ENCODE measurements at regions of chr18 and their contacts with region 1.

Region 1: DNA sequence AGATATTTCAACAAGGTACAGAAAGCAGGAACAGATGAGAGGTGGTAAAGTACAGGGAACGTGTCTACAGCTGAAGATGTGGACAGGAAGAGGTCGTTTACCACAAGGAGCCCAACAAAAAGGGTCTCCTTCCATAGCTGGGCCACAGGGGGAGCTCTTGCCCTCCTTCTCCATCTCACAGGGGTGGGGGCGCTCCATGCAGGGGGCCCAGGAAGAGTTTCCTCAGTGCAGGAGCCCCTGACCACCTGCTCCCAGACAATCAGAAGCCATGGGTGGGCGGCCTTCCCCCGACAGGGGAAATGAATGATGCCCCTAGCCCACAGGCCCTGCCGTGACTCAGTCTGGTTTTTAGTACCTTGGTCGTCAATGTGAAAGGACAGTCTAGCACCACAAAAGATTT is 163.6 kb upstream of the ZNF516 start:
- DNase-seq: peak in 1 of 2 experiments; percentile 83
- H3K4me3 ChIP-seq: no peak overlapping the region
- H3K27ac ChIP-seq: no peak overlapping the region
- H3K4me1 ChIP-seq: no peaks in the 10 kb centered on the region
- H3K27me3 ChIP-seq: no peaks in the 10 kb centered on the region
- CTCF ChIP-seq: peak; percentile 83 to 89 (median 86)
- EP300 ChIP-seq: peak in 1 of 2 experiments; percentile 64; a peak in 1 of 3 replicates
- POLR2A ChIP-seq: no peak
- RAD21 ChIP-seq: peak; percentile 78 to 82

Region 2: GRCh38 chr18:76356666-76357065 is 302.0 kb before region 1 on chr18:
- CTCF ChIA-PET with region 1: no interaction called
- POLR2A ChIA-PET with region 1: no interaction called
- DNase-seq: no peak
- H3K4me3 ChIP-seq: no peak overlapping the region
- H3K27ac ChIP-seq: no peak overlapping the region
- H3K4me1 ChIP-seq: peaks cover 0 to 5% (median 2%) of the 10 kb centered on the region in 4 experiments; a peak in 3 of 7 replicates
- H3K27me3 ChIP-seq: no peaks in the 10 kb centered on the region
- CTCF ChIP-seq: no peak
- EP300 ChIP-seq: no peak
- POLR2A ChIP-seq: no peak
- RAD21 ChIP-seq: no peak

Region 3: DNA sequence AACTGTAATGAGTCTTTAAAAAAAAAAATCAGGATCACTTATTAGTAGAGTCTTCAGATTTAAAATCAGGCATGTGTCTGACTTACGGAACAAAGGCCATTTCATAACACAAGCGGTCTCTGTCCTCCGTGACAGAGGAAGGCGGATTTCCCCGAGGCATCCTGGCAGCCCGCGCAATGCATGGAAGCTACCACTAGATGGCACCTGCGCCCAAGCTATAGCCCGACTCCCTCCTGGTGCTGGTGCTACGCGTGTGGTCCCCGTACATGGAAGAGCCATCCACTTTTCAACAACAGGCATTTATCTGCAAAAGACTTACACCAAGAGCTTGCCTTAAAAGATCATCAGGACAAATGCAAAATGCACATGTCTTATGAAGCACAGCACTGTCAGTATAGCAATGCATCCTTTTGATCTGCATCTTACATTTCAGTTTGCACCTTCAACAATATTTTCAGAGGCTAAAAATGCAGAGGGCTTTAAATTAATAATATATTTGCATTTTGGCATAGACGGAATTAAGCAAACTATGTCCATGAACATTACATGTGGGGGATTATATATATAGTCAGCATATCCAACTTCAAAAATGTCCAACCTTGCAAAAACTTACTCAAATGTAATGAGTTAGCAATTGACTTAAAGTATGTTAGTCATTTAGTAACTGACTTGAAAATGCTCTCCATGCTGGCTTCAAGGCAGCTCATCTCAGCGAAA is 259.6 kb before region 1 on chr18:
- CTCF ChIA-PET with region 1: interaction called, 17 read pairs
- POLR2A ChIA-PET with region 1: no interaction called
- DNase-seq: peak; percentile 34 to 90
- H3K4me3 ChIP-seq: no peak overlapping the region
- H3K27ac ChIP-seq: no peak overlapping the region
- H3K4me1 ChIP-seq: peaks cover 0 to 3% (median 1%) of the 10 kb centered on the region in 4 experiments; a peak in 4 of 7 replicates
- H3K27me3 ChIP-seq: no peaks in the 10 kb centered on the region
- CTCF ChIP-seq: peak; percentile 90 to 99 (median 96)
- EP300 ChIP-seq: no peak
- POLR2A ChIP-seq: no peak
- RAD21 ChIP-seq: peak; percentile 96 to 99

Region 4: GRCh38 chr18:76480913-76481312 is 177.7 kb before region 1 on chr18:
- CTCF ChIA-PET with region 1: interaction called, 23 read pairs
- POLR2A ChIA-PET with region 1: no interaction called
- DNase-seq: no peak
- H3K4me3 ChIP-seq: no peak overlapping the region
- H3K27ac ChIP-seq: no peak overlapping the region
- H3K4me1 ChIP-seq: peaks cover 0 to 5% (median 4%) of the 10 kb centered on the region in 4 experiments; a peak in 4 of 7 replicates
- H3K27me3 ChIP-seq: no peaks in the 10 kb centered on the region
- CTCF ChIP-seq: peak; percentile 46 to 62 (median 47)
- EP300 ChIP-seq: no peak
- POLR2A ChIP-seq: no peak
- RAD21 ChIP-seq: peak; percentile 36 to 46

Region 5: DNA sequence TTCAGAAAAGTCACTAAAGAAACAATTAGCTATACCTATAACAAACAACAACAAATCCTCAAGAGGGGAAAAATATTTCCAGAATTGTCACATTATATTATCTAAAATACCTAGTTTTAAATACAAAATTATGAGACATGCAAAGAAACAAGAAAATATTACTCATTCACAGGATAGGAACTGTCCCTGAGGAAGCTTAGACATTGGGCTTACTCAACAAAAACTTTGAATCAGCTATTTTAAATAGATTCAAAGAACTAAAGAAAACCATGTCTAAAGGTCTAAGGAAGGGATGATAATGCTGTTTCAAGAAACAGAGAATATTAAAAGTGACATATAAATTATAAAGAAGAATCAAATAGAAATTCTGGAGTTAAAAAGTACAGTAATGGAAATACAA is 31.6 kb before region 1 on chr18:
- CTCF ChIA-PET with region 1: interaction called, 27 read pairs
- POLR2A ChIA-PET with region 1: no interaction called
- DNase-seq: no peak
- H3K4me3 ChIP-seq: no peak overlapping the region
- H3K27ac ChIP-seq: no peak overlapping the region
- H3K4me1 ChIP-seq: peaks cover 0 to 3% (median 2%) of the 10 kb centered on the region in 4 experiments; a peak in 6 of 7 replicates
- H3K27me3 ChIP-seq: peaks cover 0 to 9% (median 4%) of the 10 kb centered on the region in 4 experiments; a peak in 4 of 7 replicates
- CTCF ChIP-seq: no peak
- EP300 ChIP-seq: no peak
- POLR2A ChIP-seq: no peak
- RAD21 ChIP-seq: no peak

Region 6: GRCh38 chr18:76670564-76671288 is 12.1 kb after region 1 on chr18:
- CTCF ChIA-PET with region 1: interaction called, 47 read pairs
- POLR2A ChIA-PET with region 1: no interaction called
- DNase-seq: no peak
- H3K4me3 ChIP-seq: no peak overlapping the region
- H3K27ac ChIP-seq: no peak overlapping the region
- H3K4me1 ChIP-seq: peaks cover 0 to 10% (median 0%) of the 10 kb centered on the region in 4 experiments; a peak in 1 of 7 replicates
- H3K27me3 ChIP-seq: no peaks in the 10 kb centered on the region
- CTCF ChIP-seq: no peak
- EP300 ChIP-seq: no peak
- POLR2A ChIP-seq: no peak
- RAD21 ChIP-seq: no peak

Region 7: DNA sequence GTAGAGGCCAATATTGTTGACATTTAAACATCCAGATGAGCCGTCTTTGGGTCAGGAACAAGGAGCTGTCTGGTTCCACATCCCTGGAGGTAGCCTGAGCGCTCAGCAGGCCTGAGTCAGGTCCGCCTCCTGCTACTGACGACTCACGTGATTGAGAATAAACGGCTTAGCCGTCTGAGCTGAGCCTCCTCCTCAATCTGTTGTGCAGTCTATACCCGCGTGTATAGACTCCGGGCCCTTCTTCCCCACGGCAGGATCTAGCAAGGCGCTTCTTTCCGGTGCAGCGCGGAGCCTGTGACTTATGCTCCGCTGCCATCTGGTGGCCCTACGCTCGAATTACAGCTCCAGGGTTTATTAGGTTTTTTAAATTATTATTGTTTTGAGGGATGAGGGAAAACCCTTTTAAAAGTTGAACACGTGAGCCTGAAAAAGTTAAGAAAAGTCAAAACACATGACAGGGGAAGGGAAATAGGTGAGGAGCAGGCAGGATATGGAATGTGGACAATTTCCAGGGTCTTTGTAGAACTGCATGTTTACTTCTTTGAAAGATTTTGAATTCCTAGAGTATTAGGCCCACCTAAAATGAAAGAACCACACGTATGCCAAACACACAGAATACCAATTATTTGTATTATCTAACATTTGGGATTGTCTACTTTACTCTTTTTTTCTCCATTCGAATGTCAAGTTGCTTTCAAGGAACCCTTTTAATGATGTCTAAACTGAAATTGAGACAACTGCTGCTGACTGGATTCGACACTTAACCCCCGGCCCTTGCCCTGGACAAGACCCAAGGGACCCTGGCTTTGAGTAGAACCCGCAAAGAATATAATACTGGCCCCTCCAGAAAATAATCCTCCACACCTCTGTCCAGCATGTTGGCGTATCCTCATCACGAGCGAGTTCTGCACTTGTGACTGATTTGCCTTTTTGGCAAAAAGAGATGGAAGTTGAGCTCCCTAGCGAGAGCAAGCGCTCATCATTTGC is 51.3 kb after region 1 on chr18:
- CTCF ChIA-PET with region 1: interaction called, 56 read pairs
- POLR2A ChIA-PET with region 1: no interaction called
- DNase-seq: peak; percentile 34 to 73
- H3K4me3 ChIP-seq: no peak overlapping the region
- H3K27ac ChIP-seq: no peak overlapping the region
- H3K4me1 ChIP-seq: no peaks in the 10 kb centered on the region; a peak in 1 of 7 replicates
- H3K27me3 ChIP-seq: no peaks in the 10 kb centered on the region
- CTCF ChIP-seq: peak; percentile 67 to 91 (median 79)
- EP300 ChIP-seq: no peak
- POLR2A ChIP-seq: no peak
- RAD21 ChIP-seq: peak; percentile 98 to 99